Activated CD8-positive, alpha-beta memory T cell treated with anti-CD3 and anti-CD28 coated beads, Interleukin-2, amount 10 ng/mL, durations not matched to agents 7 days and 5 days (primary cell): ENCODE measurements at regions of chr19 and their contacts with region 1.

Region 1: DNA sequence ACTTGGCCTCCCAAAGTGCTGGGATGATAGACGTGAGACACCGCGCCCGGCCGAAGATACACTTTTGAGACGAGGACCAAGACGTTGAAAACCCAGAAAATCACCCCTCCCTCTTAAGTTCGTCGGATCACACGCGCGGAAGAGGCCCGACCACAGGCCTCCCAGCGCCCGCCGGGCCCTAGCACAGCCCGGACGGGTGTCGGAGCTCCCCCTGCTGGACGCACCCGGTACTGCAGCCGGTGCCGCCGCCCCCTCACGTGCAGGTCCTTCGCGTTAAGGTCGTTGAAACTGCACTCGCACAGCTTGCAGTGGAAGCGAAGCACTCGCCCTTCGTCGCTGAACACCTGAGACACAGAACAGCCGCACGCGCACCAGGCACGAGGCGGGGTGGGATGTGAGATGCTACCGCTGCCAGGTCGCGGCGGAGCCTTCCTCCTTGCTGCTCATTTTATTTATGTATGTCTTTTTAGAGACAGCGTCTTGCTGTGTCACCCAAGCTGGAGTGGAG is 35.7 kb upstream of the MATK start:
- DNase-seq: peak; percentile 92
- ATAC-seq: peak; percentile 95
- H3K4me3 Mint-ChIP-seq: peak overlapping the region; percentile 30
- H3K27ac Mint-ChIP-seq: no peak overlapping the region
- H3K4me1 Mint-ChIP-seq: peaks cover 17% of the 10 kb centered on the region
- H3K27me3 Mint-ChIP-seq: no peaks in the 10 kb centered on the region

Region 2: DNA sequence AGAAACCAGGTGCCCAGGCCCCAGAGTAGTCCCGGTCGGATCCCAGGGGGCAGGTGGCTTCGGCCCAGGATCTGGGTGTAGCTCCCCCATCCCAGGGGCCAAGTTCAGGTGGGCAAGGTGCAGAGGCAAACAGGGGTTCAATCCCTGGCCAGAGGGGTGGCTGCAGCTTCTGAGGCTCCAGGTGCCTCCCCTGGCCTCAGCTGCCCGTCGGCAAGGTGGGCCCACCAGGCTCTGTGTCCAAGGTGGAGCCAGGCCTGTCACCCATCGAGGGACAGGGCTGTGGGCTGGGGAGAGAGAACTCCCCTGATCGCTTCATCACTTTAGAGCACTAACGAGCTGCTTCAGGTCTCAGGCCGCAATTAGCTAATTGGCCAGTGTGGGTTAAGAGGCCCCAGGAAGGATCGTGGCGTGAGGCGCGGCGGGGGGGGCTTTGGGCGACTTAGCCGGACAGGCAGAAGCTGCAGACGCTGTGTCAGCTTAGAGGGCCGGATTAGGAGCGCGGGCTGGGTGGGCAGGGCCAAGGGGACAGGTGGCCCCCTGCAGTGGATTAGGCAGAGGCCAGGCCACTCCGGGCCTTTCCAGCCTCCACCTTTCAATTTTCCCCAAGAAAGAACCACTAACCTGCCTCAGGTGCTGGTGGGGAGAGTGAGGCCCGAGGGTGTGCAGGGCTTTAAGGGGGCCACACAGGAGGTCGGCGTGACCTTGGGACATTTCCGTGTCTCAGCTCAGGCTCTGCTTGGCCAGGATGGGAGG is 47.1 kb before region 1 on chr19:
- CTCF ChIA-PET with region 1: interaction called, 14 read pairs
- DNase-seq: no peak
- ATAC-seq: no peak
- H3K4me3 Mint-ChIP-seq: no peak overlapping the region
- H3K27ac Mint-ChIP-seq: no peak overlapping the region
- H3K4me1 Mint-ChIP-seq: peaks cover 5% of the 10 kb centered on the region
- H3K27me3 Mint-ChIP-seq: no peaks in the 10 kb centered on the region

Region 3: DNA sequence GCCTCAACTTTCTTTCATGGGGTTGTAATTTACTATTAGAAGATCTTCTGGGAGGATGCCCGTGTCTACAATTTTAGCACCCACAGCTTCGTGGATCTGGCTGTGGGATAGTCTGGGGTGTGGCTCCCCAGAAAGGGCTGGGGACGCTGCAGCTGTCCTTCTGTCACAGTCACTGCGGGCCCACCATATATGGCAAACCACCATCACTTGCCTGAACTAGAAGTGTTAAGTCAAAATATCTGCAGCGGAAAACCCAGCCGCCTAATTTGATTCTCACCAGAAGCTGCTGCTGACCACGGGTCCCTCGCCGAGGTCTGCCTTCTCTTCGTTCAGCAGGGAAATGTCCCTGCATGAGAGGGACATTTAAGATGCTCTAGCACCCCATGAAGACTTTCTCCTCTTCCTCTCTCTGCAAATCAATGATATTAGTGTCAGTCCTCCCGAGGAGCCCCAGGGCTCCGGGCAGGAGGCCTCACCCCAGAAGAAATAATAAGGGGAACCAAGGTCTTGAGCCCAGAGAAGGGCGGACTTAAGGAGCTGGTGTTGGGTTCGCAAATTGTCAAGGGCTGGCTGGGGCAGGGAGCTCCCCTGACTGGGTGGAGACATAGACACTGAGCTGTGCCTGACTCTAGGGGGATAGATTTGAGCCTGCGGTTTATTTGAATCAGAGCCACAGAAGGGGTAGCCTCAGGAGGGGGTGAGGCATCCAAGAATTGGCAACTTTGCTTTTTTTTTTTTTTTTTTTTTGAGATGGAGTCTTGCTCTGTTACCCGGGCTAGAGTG is 32.7 kb before region 1 on chr19:
- CTCF ChIA-PET with region 1: interaction called, 27 read pairs
- DNase-seq: peak; percentile 77
- ATAC-seq: peak; percentile 67
- H3K4me3 Mint-ChIP-seq: peak overlapping the region; percentile 3
- H3K27ac Mint-ChIP-seq: peak overlapping the region; percentile 83
- H3K4me1 Mint-ChIP-seq: peaks cover 35% of the 10 kb centered on the region
- H3K27me3 Mint-ChIP-seq: peaks cover 7% of the 10 kb centered on the region

Region 4: DNA sequence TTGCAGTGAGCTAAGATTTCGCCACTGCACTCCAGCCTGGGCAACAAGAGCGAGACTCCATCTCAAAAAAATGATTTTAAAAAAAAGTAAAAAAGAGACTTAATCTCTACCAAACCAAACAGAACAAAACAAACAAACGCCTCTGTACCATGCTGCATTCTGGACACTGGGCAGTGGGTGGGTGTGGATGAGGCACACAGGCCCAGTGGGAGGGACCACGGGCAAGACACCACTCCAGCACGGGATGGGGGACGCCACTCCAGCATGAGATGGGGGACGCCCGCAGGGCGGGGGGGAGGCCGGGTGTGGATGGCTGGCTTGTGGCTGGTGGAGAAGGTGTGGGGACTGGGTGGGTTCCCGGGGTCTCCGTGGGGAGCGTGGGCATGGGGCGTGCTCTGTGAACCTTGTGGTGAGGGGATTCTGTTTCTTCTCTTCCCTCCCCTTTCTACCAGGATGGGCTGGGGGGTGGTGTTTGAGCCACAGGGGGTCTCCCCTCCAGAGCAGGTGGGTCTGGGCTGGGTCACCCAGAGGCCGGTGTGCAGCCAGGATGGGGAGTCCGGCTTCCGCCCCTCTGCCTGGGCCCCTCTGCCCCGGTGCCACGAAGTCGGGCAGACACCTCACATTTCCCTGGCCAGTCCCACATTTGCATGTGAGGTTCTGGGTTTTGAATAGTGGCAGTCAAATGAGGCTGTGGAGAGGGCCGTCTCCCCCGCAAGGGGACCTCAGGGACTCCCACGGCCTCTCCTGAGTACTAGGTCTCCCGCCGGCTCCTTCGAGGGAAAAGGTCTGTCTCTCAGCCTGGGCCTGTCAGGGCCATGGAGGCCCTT is 11.8 kb before region 1 on chr19:
- CTCF ChIA-PET with region 1: interaction called, 29 read pairs
- DNase-seq: no peak
- ATAC-seq: no peak
- H3K4me3 Mint-ChIP-seq: no peak overlapping the region
- H3K27ac Mint-ChIP-seq: no peak overlapping the region
- H3K4me1 Mint-ChIP-seq: peaks cover 50% of the 10 kb centered on the region
- H3K27me3 Mint-ChIP-seq: no peaks in the 10 kb centered on the region